Aorta (tissue), 5 donors: ENCODE measurements at regions of chr7 and their contacts with region 1.

Region 1: DNA sequence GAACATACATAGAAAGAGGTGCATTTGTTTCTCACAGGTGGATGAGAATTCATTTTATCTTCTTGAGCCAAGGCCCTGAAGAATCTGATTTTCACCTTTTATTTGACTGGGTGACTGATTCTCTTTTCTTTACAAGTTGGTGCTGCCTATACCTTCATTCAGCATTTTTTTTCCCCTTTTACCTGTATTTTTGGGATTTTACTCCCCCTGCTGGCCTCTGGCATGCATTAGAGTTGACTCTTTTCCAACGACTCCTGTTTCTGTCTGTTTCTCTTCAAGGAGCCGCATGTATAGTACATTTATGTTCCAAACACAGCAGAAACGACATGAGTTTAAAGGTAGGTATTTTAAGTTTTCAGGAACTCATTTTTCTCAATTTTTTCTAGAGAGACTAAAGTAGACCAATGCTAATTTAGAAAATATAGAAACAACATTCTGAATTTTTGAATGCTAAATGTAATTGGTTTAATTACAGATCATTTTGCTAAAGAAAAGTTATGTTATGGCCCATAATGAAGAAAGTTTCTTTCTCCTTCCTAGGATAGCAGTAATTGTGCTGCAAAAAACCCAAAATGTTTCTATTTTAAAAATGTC is 149.8 kb upstream of the HDAC9 start:
- DNase-seq: no peak
- ATAC-seq: no peak
- H3K4me3 ChIP-seq: no peak overlapping the region
- H3K27ac ChIP-seq: no peak overlapping the region
- H3K4me1 ChIP-seq: no peaks in the 10 kb centered on the region
- H3K27me3 ChIP-seq: no peaks in the 10 kb centered on the region

Region 2: DNA sequence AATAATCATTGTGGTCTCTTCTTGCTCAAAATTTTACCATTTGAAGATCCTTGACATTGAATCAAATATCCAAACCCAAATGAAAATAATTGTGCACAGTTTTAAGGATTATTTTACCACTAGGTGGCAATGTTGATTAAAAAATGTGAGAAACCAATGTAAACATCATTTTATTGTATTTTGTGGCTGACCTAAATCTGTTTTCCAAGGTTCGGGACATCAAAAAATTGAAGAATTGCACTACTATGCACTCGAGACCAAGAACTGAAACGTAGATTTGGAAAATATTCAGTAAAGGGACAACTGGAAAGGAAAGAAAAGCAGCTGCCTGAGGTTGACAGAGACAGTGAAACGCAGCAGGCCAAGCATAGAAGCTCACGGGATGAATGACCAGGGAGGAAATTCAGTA is 664.8 kb before region 1 on chr7:
- intact Hi-C with region 1: loop called (anchors 5 to 10 kb)
- DNase-seq: no peak
- ATAC-seq: no peak
- H3K4me3 ChIP-seq: no peak overlapping the region
- H3K27ac ChIP-seq: no peak overlapping the region
- H3K4me1 ChIP-seq: peaks cover 2 to 4% of the 10 kb centered on the region in 2 donors
- H3K27me3 ChIP-seq: no peaks in the 10 kb centered on the region

Region 3: GRCh38 chr7:17971411-17971810 is 374.3 kb before region 1 on chr7:
- intact Hi-C with region 1: loop called (anchors 5 to 10 kb)
- DNase-seq: no peak
- ATAC-seq: no peak
- H3K4me3 ChIP-seq: no peak overlapping the region
- H3K27ac ChIP-seq: no peak overlapping the region
- H3K4me1 ChIP-seq: no peaks in the 10 kb centered on the region
- H3K27me3 ChIP-seq: no peaks in the 10 kb centered on the region

Region 4: GRCh38 chr7:18064242-18064838 is 281.4 kb before region 1 on chr7:
- intact Hi-C with region 1: loop called (anchors 2 kb)
- DNase-seq: no peak
- ATAC-seq: no peak
- H3K4me3 ChIP-seq: no peak overlapping the region
- H3K27ac ChIP-seq: no peak overlapping the region
- H3K4me1 ChIP-seq: no peaks in the 10 kb centered on the region
- H3K27me3 ChIP-seq: no peaks in the 10 kb centered on the region